Right lobe of liver (tissue), 6 donors: ENCODE measurements at regions of chr1 and their contacts with region 1.

Region 1: GRCh38 chr1:184483101-184483683 is 96.4 kb downstream of the C1orf21 start:
- DNase-seq: no peak
- ATAC-seq: peak; percentile 40 to 84 (median 59)
- H3K4me3 ChIP-seq: no peak overlapping the region
- H3K27ac ChIP-seq: peak overlapping the region in 1 of 3 donors; percentile 36
- H3K4me1 ChIP-seq: peaks cover 0 to 21% (median 0%) of the 10 kb centered on the region in 4 donors
- H3K27me3 ChIP-seq: no peaks in the 10 kb centered on the region
- CTCF ChIP-seq: no peak
- POLR2A ChIP-seq: no peak

Region 2: GRCh38 chr1:184407816-184408537 is 75.2 kb before region 1 on chr1:
- intact Hi-C with region 1: loop called in 1 of 2 experiments (anchors 5 kb)
- DNase-seq: no peak
- ATAC-seq: peak; percentile 77 to 94 (median 85)
- H3K4me3 ChIP-seq: no peak overlapping the region
- H3K27ac ChIP-seq: peak overlapping the region in 1 of 3 donors; percentile 42
- H3K4me1 ChIP-seq: peaks cover 0 to 20% (median 0%) of the 10 kb centered on the region in 4 donors
- H3K27me3 ChIP-seq: no peaks in the 10 kb centered on the region
- CTCF ChIP-seq: no peak
- POLR2A ChIP-seq: no peak

Region 3: GRCh38 chr1:184597659-184598357 is 114.6 kb after region 1 on chr1:
- intact Hi-C with region 1: no loop called
- DNase-seq: no peak
- ATAC-seq: peak in 2 of 4 donors; percentile 17 to 29
- H3K4me3 ChIP-seq: no peak overlapping the region
- H3K27ac ChIP-seq: no peak overlapping the region
- H3K4me1 ChIP-seq: no peaks in the 10 kb centered on the region
- H3K27me3 ChIP-seq: no peaks in the 10 kb centered on the region
- CTCF ChIP-seq: no peak
- POLR2A ChIP-seq: no peak